Transverse colon (tissue), 4 donors: ENCODE measurements at regions of chr14 and their contacts with region 1.

Region 1: DNA sequence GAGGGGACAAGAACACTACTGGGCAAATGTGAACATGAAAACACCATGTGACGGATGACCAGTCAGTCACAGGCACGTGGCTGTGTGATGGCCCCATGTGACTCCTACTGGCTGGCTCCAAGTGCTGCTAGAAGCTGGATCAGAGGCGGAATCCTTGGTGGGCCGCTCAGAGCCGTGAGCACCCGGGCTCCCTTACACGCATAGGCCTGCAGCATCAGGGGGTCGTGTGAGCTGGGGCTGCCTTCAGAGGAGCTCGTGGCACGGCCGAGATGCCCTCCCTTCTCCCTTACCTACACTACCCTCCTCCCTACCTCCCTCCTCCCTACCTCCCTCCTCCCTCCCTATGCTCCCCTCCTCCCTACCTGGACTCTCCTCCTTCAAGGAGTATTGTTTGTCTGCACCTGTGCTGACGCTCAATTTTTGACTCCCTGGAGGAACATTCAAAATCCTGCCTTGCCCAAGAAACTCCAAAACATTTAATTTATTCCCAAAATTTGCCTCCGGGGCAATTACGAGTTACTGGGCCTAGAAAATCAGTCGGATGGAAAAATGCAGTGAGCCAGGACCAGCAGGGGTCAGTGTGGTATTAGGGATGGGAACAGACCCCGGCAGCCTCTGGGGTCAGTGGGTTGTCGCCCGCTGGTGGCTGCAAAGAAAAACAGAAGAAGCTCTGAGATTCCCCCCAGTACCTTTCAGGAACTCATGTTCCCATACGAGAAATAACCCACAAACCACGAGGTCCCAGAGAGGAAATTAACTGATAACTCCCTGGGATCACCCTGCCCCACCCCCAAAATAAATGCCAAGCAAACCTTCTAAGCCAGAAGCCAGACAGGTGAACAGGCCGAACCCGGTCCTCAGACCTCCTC is 61.2 kb downstream of the C14orf132 start:
- DNase-seq: peak; percentile 84
- H3K4me3 ChIP-seq: no peak overlapping the region
- H3K27ac ChIP-seq: peak overlapping the region in 1 of 4 donors; percentile 1
- H3K4me1 ChIP-seq: peaks cover 6 to 19% (median 10%) of the 10 kb centered on the region in 4 donors
- H3K27me3 ChIP-seq: no peaks in the 10 kb centered on the region
- CTCF ChIP-seq: peak; percentile 81 to 96 (median 86)
- EP300 ChIP-seq: no peak
- POLR2A ChIP-seq: no peak

Region 2: DNA sequence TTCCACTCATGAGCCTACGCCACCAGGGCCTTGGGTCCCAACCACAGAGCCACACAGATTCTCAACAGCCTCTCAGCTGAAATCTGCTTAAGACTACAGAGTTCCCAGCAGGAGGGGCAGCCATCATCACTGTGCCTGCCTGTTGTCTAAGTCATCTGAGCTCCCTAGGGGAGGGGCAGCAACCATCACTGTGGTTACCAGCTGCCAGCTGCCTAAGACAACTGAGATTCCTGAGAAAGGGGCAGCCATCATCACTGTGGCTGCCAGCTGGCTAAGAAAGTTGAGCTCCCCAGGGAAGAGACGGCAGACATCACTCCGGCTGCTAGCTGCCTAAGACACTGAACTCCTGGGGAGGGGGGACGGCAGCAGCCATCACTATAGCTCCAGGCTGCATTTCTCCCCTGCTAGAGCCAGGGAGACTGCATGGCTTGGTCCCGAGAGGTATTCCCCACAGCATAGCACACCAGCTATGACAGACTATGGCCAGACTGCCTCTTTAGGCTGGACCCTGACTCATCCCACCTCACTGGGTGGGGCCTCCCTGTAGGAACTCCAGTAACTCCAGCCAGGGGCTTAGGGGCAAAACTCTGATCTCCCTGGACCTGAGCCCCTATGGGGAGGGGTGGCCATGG is 98.4 kb before region 1 on chr14:
- in situ Hi-C with region 1: loop called in 1 of 4 experiments (anchors 10 kb)
- intact Hi-C with region 1: loop called (anchors 5 kb)
- DNase-seq: no peak
- H3K4me3 ChIP-seq: no peak overlapping the region
- H3K27ac ChIP-seq: no peak overlapping the region
- H3K4me1 ChIP-seq: no peaks in the 10 kb centered on the region
- H3K27me3 ChIP-seq: peaks cover 25% of the 10 kb centered on the region
- CTCF ChIP-seq: no peak
- EP300 ChIP-seq: no peak
- POLR2A ChIP-seq: no peak

Region 3: DNA sequence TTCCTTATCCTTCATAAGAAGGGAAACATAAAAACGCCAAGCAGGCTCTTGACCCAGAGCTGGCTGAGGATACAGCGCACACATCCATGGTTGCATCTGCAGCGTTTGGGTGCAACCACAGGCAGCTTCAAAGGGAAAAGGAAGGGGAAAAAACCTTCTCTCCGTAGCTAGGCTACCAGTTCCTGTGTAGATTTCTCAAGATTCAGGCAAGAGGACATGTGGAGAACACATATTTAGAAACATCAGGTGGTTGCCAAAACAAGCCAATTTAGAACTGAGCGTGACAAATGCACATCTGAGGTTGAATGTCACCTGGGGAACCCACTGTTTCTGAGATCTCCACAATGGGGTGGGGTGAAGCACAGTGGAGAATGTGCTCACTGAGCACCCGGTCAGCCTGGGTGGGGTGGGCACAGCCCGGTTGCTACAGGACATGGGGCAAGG is 26.0 kb after region 1 on chr14:
- in situ Hi-C with region 1: no loop called
- intact Hi-C with region 1: no loop called
- DNase-seq: no peak
- H3K4me3 ChIP-seq: no peak overlapping the region
- H3K27ac ChIP-seq: peak overlapping the region; percentile 1 to 28 (median 12)
- H3K4me1 ChIP-seq: no peaks in the 10 kb centered on the region
- H3K27me3 ChIP-seq: no peaks in the 10 kb centered on the region
- CTCF ChIP-seq: no peak
- EP300 ChIP-seq: no peak
- POLR2A ChIP-seq: no peak

Region 4: GRCh38 chr14:96204151-96205058 is 104.0 kb after region 1 on chr14 and contains the start of gene BDKRB2:
- in situ Hi-C with region 1: no loop called
- intact Hi-C with region 1: loop called (anchors 10 kb)
- DNase-seq: peak; percentile 82
- H3K4me3 ChIP-seq: peak within 1 kb of the TSS; percentile 25 to 51 (median 36)
- H3K27ac ChIP-seq: peak within 1 kb of the TSS; percentile 69 to 84 (median 80)
- H3K4me1 ChIP-seq: peaks cover 8 to 35% (median 28%) of the 10 kb centered on the region in 4 donors
- H3K27me3 ChIP-seq: no peaks in the 10 kb centered on the region
- CTCF ChIP-seq: no peak
- EP300 ChIP-seq: no peak
- POLR2A ChIP-seq: peak; percentile 95
- total RNA-seq, gene BDKRB2: 2.6 to 19.8 (median 17.4) TPM

Region 5: GRCh38 chr14:96275177-96276112 is 175.1 kb after region 1 on chr14:
- in situ Hi-C with region 1: loop called (anchors 5 kb)
- intact Hi-C with region 1: loop called (anchors 2 kb)
- DNase-seq: peak; percentile 75
- H3K4me3 ChIP-seq: no peak overlapping the region
- H3K27ac ChIP-seq: peak overlapping the region; percentile 13 to 58 (median 33)
- H3K4me1 ChIP-seq: peaks cover 4 to 13% (median 5%) of the 10 kb centered on the region in 4 donors
- H3K27me3 ChIP-seq: no peaks in the 10 kb centered on the region
- CTCF ChIP-seq: peak; percentile 95 to 97 (median 96)
- EP300 ChIP-seq: no peak
- POLR2A ChIP-seq: no peak

Region 6: DNA sequence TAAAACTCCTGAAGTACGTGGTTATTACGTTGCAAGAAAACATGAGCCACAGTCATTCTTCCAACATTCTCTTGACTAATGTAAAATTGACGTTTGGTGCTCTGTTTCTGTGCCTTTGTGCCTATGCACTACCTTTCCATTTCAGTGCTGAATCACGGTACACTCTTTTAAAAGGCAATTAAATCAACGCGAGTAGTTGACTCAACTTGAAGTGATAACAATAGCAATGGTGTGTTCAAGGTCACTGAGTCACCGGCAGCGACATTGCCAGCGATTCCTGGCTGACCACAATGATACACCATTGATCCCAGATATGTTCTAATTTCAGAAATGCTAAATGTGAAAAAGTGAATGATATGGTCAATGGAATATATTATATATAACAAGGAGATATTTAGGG is 309.3 kb after region 1 on chr14:
- in situ Hi-C with region 1: loop called in 3 of 4 experiments (anchors 10 to 25 kb)
- intact Hi-C with region 1: no loop called
- DNase-seq: no peak
- H3K4me3 ChIP-seq: no peak overlapping the region
- H3K27ac ChIP-seq: no peak overlapping the region
- H3K4me1 ChIP-seq: no peaks in the 10 kb centered on the region
- H3K27me3 ChIP-seq: no peaks in the 10 kb centered on the region
- CTCF ChIP-seq: no peak
- EP300 ChIP-seq: no peak
- POLR2A ChIP-seq: no peak

Region 7: DNA sequence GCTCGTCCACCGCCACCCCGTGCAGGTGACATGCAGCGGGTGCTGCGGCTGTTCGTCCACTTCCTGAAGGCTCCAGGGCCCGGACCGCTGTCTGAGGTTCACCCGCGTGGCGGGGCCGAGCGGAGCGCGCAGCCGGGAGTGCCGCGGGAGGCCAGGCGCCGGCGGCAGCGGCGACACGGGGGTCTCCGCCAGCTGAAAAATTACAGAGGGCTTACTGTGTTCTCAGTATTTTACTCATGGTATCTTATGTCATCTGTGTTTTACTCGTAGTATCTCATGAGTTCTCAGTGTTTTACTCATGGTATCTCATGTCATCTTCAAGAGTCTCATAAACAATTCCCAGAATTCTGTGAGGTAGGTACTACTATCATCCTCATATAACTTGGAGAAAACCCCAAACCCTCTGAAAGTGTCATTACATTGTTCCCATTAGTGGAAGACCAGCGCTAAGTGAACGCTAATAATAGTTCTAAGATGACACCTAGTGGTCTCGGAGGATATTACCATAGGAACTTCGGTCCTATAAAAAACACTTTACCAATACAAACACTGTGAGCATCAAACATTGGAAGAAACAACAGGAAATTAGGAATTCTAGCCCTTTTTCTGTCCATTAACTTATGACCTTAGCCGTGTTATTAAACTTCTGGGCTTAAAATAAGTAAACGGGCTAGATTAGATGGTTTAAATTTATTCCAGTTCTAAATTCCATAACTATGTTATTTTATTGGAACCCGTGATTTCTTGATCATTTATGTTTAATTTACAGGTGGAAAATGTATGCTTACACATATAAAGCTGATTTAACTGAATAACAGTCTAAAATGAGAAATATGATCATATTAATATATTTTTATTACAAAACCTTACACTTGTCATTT is 324.0 kb after region 1 on chr14:
- in situ Hi-C with region 1: loop called in 3 of 4 experiments (anchors 10 to 25 kb)
- intact Hi-C with region 1: no loop called
- DNase-seq: peak; percentile 48
- H3K4me3 ChIP-seq: peak overlapping the region; percentile 12 to 63 (median 38)
- H3K27ac ChIP-seq: peak overlapping the region in 2 of 4 donors; percentile 14 to 31
- H3K4me1 ChIP-seq: peaks cover 0 to 11% (median 3%) of the 10 kb centered on the region in 4 donors
- H3K27me3 ChIP-seq: no peaks in the 10 kb centered on the region
- CTCF ChIP-seq: peak; percentile 78 to 91 (median 82)
- EP300 ChIP-seq: no peak
- POLR2A ChIP-seq: no peak

Region 8: GRCh38 chr14:96434040-96434787 is 333.8 kb after region 1 on chr14:
- in situ Hi-C with region 1: no loop called
- intact Hi-C with region 1: loop called (anchors 10 kb)
- DNase-seq: no peak
- H3K4me3 ChIP-seq: no peak overlapping the region
- H3K27ac ChIP-seq: no peak overlapping the region
- H3K4me1 ChIP-seq: no peaks in the 10 kb centered on the region
- H3K27me3 ChIP-seq: no peaks in the 10 kb centered on the region
- CTCF ChIP-seq: no peak
- EP300 ChIP-seq: no peak
- POLR2A ChIP-seq: no peak